Activated CD4-positive, alpha-beta memory T cell treated with anti-CD3 and anti-CD28 coated beads, Interleukin-2, amount 10 ng/mL, durations not matched to agents 7 days and 5 days (primary cell): ENCODE measurements at regions of chr10 and their contacts with region 1.

Region 1: DNA sequence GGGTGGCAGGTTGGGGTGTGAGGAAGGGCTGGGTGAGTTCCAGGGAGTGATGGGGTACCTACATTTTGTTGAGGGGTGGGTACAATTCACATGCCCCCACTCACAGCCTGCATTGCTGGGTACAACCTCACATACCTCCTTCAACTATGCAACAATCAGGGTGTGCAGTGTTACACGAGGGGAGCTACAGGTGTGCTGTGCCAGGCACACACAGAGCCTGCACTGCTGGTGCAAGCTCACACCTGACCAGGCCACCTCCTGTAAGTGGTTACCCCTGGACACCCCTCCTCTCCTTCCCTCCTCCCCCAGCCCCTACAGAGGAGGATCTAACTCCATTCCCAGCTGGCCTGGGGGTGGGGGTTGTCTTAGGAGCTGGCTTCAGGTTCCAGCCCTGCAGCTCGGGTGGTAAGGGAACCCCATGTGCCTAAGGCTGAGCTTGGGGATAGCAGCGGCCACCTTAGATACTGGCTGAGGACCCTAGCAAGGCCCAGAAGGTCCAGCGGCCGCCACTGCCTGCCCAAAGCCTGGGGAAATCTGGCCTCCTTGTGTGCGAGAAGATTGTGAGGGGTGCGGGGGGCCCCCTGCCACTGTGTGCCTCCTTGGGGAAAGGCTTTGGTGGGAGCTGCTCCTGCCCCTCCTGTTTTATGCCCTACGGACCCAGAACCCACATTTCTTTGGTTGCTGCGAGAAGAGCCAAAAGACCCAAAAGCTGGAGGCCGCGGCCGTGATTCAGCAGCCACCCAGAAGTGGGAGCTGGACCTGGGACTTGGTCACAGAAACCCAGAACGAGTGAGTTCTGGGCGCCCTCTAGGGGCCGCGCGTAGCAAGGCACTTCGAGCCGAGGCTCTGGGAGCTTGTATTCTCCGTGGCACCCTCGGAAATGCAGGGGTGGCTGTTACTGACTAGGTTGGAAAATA is 10.8 kb downstream of the TLX1 start:
- DNase-seq: peak; percentile 79
- H3K4me3 Mint-ChIP-seq: no peak overlapping the region
- H3K27ac Mint-ChIP-seq: no peak overlapping the region
- H3K4me1 Mint-ChIP-seq: peaks cover 13% of the 10 kb centered on the region
- H3K27me3 Mint-ChIP-seq: peaks cover 95% of the 10 kb centered on the region

Region 2: DNA sequence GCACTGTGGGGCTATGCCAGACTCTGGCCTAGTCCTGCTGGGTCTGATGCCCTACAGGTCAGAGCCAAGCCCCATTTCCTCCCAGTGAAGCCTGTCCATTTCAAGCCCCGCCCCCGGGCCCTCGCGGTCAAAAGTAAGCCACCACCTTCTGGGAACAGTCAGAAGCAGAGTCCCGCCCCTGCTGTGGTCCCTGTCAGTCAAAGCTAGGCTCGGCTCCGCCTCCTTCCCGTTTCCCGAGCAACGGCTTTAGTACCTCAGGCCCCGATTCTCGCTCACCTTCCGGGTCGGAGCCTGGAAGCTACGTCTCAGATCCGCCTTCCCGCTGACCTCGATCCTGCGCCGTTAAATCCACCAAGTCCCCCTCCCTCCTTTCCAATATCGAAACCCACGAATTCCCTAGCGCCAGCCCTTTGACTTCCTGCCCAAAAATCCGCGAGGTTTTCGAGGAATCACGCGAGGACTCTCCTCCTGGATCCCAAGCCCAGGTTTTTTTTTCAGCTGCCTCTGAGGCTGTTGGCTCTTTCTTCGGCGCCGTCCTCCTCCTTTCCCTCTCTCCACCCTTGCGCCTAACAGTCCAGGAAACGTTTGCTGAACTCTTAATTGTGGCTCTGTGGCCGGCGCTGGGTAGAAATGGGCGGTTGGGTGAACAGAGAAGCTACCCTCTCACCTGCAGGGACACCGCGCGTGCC is 99.1 kb before region 1 on chr10:
- CTCF ChIA-PET with region 1: interaction called, 15 read pairs
- POLR2A ChIA-PET with region 1: no interaction called
- DNase-seq: peak; percentile 93
- H3K4me3 Mint-ChIP-seq: peak overlapping the region; percentile 96
- H3K27ac Mint-ChIP-seq: peak overlapping the region; percentile 80
- H3K4me1 Mint-ChIP-seq: peaks cover 27% of the 10 kb centered on the region
- H3K27me3 Mint-ChIP-seq: peaks cover 27% of the 10 kb centered on the region

Region 3: GRCh38 chr10:101060036-101060950 is 81.6 kb before region 1 on chr10:
- CTCF ChIA-PET with region 1: interaction called, 26 read pairs
- POLR2A ChIA-PET with region 1: interaction called, 3 read pairs
- DNase-seq: peak; percentile 91
- H3K4me3 Mint-ChIP-seq: peak overlapping the region; percentile 84
- H3K27ac Mint-ChIP-seq: peak overlapping the region; percentile 83
- H3K4me1 Mint-ChIP-seq: peaks cover 48% of the 10 kb centered on the region
- H3K27me3 Mint-ChIP-seq: peaks cover 23% of the 10 kb centered on the region

Region 4: GRCh38 chr10:101095542-101096213 is 46.2 kb before region 1 on chr10:
- CTCF ChIA-PET with region 1: interaction called, 307 read pairs
- POLR2A ChIA-PET with region 1: interaction called, 12 read pairs
- DNase-seq: peak; percentile 78
- H3K4me3 Mint-ChIP-seq: no peak overlapping the region
- H3K27ac Mint-ChIP-seq: no peak overlapping the region
- H3K4me1 Mint-ChIP-seq: no peaks in the 10 kb centered on the region
- H3K27me3 Mint-ChIP-seq: peaks cover 21% of the 10 kb centered on the region

Region 5: DNA sequence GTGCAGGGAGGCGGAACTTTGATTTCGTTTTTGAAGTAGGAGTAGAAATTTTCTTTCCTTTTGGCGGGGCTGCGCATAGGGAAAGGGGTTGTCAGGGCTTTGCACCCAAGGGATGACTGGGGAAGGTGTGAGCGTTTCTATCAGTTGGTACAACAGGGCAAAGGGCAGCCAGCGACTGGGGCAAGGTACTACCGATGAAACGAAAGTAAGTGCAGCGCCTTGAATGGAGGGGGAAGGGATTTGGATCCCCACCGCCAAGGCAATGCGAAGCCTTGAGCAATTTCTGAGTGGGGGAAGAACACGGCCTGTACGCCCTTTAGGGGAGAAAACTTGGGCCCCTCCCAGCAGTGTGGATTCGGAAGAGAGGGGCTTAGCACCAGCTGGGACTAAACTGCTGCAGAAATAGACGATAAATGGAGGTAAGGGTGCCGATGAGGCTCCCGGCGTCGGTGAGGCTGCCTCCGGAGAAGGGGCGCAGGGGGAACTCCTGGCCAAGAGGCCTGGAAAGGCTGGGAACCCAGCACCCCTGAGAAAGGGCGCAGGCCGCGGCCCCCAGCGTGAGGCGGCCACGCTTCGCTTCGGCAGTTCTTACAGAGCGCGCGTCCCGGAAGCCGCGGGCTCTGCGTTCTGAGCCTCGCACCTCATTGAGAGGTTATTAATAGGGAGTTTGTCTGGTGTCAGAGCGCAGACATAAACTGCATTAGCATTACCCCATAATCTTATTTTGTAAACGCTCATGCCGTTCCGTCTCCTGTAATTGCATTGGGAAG is 20.8 kb before region 1 on chr10:
- CTCF ChIA-PET with region 1: interaction called, 41 read pairs
- POLR2A ChIA-PET with region 1: interaction called, 3 read pairs
- DNase-seq: peak; percentile 53
- H3K4me3 Mint-ChIP-seq: peak overlapping the region; percentile 78
- H3K27ac Mint-ChIP-seq: no peak overlapping the region
- H3K4me1 Mint-ChIP-seq: peaks cover 25% of the 10 kb centered on the region
- H3K27me3 Mint-ChIP-seq: peaks cover 60% of the 10 kb centered on the region

Region 6: DNA sequence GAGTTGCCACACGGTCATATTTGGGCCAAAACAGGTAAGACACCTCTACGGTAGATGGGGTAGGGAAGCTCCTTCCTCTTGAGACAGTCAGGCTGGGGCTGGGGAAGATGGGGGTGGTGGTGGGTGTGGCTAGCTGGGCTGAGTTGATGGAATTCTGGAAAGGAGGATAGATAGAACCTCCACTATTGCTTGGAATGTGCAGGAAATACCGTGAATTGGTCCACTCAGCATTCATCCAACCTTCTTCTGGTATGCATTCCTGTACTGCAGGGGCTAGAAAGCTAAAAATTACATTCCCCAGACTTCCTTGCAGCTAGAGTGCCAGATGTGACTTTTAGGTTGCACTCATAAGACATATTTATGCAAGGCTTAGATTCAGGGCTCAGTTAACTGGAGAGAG is 14.0 kb after region 1 on chr10:
- CTCF ChIA-PET with region 1: interaction called, 20 read pairs
- POLR2A ChIA-PET with region 1: no interaction called
- DNase-seq: no peak
- H3K4me3 Mint-ChIP-seq: no peak overlapping the region
- H3K27ac Mint-ChIP-seq: no peak overlapping the region
- H3K4me1 Mint-ChIP-seq: peaks cover 6% of the 10 kb centered on the region
- H3K27me3 Mint-ChIP-seq: peaks cover 49% of the 10 kb centered on the region

Region 7: DNA sequence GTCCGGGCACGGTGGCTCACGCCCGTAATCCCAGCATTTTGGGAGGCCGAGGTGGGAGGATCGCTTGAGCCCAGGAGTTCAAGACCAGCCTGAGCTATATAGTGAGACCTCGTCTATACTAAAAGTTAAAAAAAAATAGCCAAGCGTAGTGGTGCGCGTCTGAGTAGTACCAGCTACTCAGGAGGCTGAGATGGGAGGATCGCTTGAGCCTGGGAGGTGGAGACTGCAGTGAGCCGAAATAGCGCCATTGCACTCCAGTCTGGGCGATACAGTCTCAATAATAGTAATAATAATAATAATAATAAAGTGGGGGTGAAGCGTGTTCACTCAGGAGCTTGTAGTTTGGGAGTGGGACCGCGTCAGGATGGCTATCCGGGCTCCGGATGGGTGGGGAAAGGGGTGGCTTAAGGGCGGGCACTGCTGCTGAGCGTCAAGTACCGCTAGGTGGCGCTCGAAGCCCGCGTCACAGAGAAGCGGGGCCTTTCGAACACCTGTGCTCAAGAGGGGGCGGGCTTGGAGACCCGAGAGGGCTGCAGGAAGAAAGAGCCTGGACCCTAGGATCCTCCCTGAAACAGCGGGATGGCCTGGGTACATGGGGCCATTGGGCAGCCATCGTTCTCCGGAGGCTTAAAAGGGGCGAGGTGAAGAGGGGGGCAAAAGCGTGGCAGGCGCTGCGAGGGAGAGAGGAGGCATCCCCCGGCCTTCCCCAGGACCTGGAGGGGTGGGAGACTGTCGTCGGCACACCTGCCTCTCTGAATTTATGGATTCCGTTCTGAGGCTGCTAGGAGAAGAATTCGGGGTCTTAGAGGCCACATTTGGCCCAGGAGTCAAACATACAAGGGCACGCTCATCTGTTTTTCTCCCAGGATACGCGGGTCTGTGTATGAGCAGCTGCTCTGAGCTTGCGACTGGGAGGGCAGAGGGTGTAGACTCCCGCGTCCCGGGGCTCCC is 72.8 kb after region 1 on chr10:
- CTCF ChIA-PET with region 1: interaction called, 18 read pairs
- POLR2A ChIA-PET with region 1: no interaction called
- DNase-seq: peak; percentile 74
- H3K4me3 Mint-ChIP-seq: no peak overlapping the region
- H3K27ac Mint-ChIP-seq: peak overlapping the region; percentile 46
- H3K4me1 Mint-ChIP-seq: peaks cover 31% of the 10 kb centered on the region
- H3K27me3 Mint-ChIP-seq: peaks cover 73% of the 10 kb centered on the region

Region 8: DNA sequence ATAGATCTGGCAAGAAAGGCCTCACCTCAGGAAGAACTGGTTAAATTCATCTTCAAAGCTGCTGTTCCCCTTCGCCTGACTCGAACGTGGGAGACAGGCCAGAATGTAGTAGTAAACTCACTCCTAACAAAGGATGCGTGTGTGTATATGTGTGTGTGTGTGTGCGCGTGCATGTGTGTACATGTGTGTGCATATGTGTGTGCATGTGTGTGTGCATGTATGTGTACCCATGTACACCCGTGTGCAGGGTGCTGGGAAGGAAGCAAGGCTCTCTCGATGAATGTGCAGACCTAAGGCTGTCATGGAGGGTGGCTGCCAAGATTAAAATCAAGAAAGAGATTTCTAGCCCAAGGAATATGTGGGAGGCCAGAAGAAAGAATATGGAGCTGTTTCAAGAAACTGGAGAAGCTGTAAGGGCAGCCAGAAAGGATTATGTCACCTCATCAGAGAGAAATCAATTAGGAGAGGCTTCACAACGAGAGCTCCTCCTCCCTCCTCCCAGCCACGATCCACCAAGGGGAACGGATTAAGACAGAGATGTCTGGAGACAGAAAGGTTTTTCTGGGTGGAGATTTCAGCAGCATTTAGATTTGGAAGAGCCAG is 121.4 kb after region 1 on chr10:
- CTCF ChIA-PET with region 1: no interaction called
- POLR2A ChIA-PET with region 1: no interaction called
- DNase-seq: no peak
- H3K4me3 Mint-ChIP-seq: no peak overlapping the region
- H3K27ac Mint-ChIP-seq: no peak overlapping the region
- H3K4me1 Mint-ChIP-seq: no peaks in the 10 kb centered on the region
- H3K27me3 Mint-ChIP-seq: peaks cover 20% of the 10 kb centered on the region